ENCODE measurements at regions of chr17 and their contacts with region 1.

Region 1: DNA sequence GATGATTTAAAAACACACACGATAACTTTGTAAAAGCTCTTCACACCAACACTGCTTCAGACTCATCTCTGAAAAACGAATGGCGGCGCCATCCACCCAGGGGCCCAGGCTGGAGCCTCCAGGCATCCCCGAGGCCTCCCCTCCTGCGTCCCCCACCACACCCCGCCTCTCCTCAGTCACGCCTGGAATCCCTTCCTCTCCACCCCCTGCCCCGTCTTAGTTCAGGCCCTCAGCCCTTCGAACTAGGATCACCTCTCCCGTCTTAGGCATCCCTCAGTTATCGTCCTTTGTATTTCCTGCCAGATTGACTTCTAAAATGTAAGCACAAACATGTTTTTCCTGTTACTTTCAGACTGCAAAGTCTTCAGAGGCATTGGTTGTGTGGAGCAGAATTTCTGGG is 58.3 kb downstream of the NDEL1 start:
- DNase-seq: no peak
- H3K4me3 ChIP-seq: no peak overlapping the region
- H3K27ac ChIP-seq: no peak overlapping the region
- H3K4me1 ChIP-seq: no peaks in the 10 kb centered on the region
- H3K27me3 ChIP-seq: no peaks in the 10 kb centered on the region
- CTCF ChIP-seq: no peak

Region 2: DNA sequence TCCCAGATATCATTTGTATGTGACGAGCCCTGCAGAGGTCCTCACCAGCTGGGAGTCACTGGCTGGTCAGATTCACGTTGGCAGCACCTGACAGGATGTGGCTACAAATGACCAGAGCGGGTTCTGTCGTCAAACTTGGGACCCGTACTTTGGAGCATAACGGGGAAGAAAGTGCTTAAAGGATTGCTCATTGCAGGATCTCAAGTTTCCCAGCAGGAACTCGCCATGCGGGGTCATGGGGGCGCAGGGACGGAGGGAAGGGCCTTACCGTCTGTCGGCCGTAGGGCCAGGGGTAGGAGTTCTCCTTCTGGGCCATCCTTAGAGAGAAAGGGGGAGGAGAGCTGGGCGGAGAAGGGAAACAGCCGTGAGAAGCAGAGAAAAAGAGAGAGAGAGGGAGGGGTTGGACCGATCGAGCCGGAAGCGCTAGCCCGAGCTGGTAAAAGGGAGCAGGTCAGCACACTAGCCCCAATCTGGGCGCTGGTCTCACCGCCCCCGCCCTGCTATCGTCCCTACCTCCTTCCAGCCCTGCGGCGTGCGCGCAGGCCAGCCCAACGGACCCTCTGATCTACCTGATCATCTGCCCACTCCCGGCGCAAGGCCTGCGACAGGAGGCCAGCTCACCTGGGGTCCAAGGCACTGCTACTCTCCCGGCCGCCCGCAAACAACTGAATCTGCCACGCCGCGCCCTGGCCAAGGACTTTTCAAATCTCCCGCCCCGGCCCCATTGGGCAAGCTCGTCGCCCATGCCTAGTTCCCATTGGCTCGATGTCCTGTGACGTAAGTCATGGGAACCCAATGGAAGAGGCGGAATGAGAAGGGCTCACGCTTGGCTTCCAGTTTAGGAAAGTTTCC is 283.9 kb before region 1 on chr17 and contains the start of gene AURKB:
- CTCF ChIA-PET with region 1: no interaction called
- POLR2A ChIA-PET with region 1: interaction called, 11 read pairs
- intact Hi-C with region 1: no loop called
- DNase-seq: peak; percentile 84 to 96
- H3K4me3 ChIP-seq: peak within 1 kb of the TSS; percentile 70
- H3K27ac ChIP-seq: peak within 1 kb of the TSS; percentile 55
- H3K4me1 ChIP-seq: peaks cover 12% of the 10 kb centered on the region
- H3K27me3 ChIP-seq: no peaks in the 10 kb centered on the region
- CTCF ChIP-seq: no peak
- total RNA-seq, gene AURKB: 159 and 167 TPM in 2 replicates

Region 3: GRCh38 chr17:8522577-8522976 is 28.6 kb after region 1 on chr17:
- CTCF ChIA-PET with region 1: no interaction called
- POLR2A ChIA-PET with region 1: no interaction called
- intact Hi-C with region 1: no loop called
- DNase-seq: no peak
- H3K4me3 ChIP-seq: no peak overlapping the region
- H3K27ac ChIP-seq: no peak overlapping the region
- H3K4me1 ChIP-seq: no peaks in the 10 kb centered on the region
- H3K27me3 ChIP-seq: peaks cover 69% of the 10 kb centered on the region
- CTCF ChIP-seq: no peak

Measured in PC-9 (cell line).